Common myeloid progenitor, CD34-positive (primary cell): ENCODE measurements at regions of chr9 and their contacts with region 1.

Region 1: GRCh38 chr9:121253821-121254471 is 14.0 kb upstream of the GSN start:
- DNase-seq: peak in 2 of 3 donors; percentile 46 to 58
- H3K4me3 ChIP-seq: peak overlapping the region in 2 of 7 experiments; percentile 15 to 42
- H3K27ac ChIP-seq: no peak overlapping the region
- H3K4me1 ChIP-seq: peaks cover 20 to 43% (median 26%) of the 10 kb centered on the region in 4 experiments
- H3K27me3 ChIP-seq: no peaks in the 10 kb centered on the region

Region 2: GRCh38 chr9:121201738-121202533 is 52.0 kb before region 1 on chr9 and contains the start of gene RAB14:
- CTCF ChIA-PET with region 1: no interaction called
- POLR2A ChIA-PET with region 1: no interaction called
- DNase-seq: peak; percentile 98 to 99 (median 99)
- H3K4me3 ChIP-seq: peak within 1 kb of the TSS; percentile 80 to 98 (median 89)
- H3K27ac ChIP-seq: peak within 1 kb of the TSS; percentile 82 to 91
- H3K4me1 ChIP-seq: peaks cover 23 to 42% (median 39%) of the 10 kb centered on the region in 4 experiments
- H3K27me3 ChIP-seq: no peaks in the 10 kb centered on the region

Region 3: GRCh38 chr9:121267689-121268597 is 14.0 kb after region 1 on chr9 and contains the start of gene GSN:
- CTCF ChIA-PET with region 1: interaction called, 45 read pairs
- POLR2A ChIA-PET with region 1: no interaction called
- DNase-seq: peak in 2 of 3 donors; percentile 51 to 76
- H3K4me3 ChIP-seq: peak within 1 kb of the TSS; percentile 70 to 85 (median 78)
- H3K27ac ChIP-seq: peak within 1 kb of the TSS in 1 of 2 experiments; percentile 4
- H3K4me1 ChIP-seq: peaks cover 23 to 64% (median 56%) of the 10 kb centered on the region in 4 experiments
- H3K27me3 ChIP-seq: no peaks in the 10 kb centered on the region